Naive thymus-derived CD4-positive, alpha-beta T cell (primary cell): ENCODE measurements at regions of chr2 and their contacts with region 1.

Region 1: DNA sequence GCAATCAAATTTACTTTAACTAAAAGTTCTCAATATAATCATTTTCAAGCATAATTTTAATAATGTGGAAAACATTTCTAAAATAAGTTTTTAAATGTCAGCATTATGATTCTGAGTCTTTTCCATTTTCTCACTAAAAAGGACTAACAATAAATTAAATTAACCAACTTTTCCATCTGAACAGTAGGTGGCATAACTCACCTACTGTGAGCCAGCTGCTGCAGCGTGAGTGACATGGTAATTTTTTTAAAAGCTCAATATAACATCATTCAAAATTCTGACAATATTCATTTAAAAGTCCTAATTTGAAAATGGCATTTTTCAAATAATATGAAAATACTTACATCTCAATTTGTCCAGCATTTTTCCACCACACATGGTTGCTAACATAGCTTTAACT is 66.5 kb downstream of the DTNB start:
- DNase-seq: peak in 5 of 9 donors; percentile 20 to 47 (median 33)
- ATAC-seq: peak; percentile 57
- H3K4me3 ChIP-seq: no peak overlapping the region
- H3K4me3 Mint-ChIP-seq: no peak overlapping the region
- H3K27ac ChIP-seq: no peak overlapping the region
- H3K27ac Mint-ChIP-seq: no peak overlapping the region
- H3K4me1 ChIP-seq: no peaks in the 10 kb centered on the region
- H3K4me1 Mint-ChIP-seq: peaks cover 0 to 21% (median 4%) of the 10 kb centered on the region in 7 donors
- H3K27me3 ChIP-seq: no peaks in the 10 kb centered on the region
- H3K27me3 Mint-ChIP-seq: no peaks in the 10 kb centered on the region

Region 2: DNA sequence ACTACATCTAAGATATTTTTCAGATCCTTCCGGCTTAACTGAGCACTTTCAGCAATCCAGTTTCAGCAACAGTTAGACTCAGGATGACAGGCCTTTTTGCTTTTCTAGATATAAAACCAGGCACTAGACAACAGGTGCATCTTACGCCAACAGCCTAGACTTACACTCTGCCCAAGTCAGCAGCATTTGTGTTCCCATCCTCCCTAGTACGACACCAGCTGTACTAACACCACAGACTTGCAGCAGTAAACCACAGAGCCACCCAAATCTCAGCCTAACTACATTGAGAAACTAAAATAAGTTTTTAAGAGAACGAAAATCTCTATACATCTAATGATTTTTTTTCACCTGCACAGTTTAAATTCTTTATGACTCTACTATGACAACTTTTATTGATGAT is 175.3 kb before region 1 on chr2:
- CTCF ChIA-PET with region 1: no interaction called
- POLR2A ChIA-PET with region 1: no interaction called
- intact Hi-C with region 1: no loop called
- DNase-seq: no peak
- ATAC-seq: no peak
- H3K4me3 ChIP-seq: no peak overlapping the region
- H3K4me3 Mint-ChIP-seq: no peak overlapping the region
- H3K27ac ChIP-seq: no peak overlapping the region
- H3K27ac Mint-ChIP-seq: no peak overlapping the region
- H3K4me1 ChIP-seq: no peaks in the 10 kb centered on the region
- H3K4me1 Mint-ChIP-seq: peaks cover 0 to 13% (median 0%) of the 10 kb centered on the region in 7 donors
- H3K27me3 ChIP-seq: no peaks in the 10 kb centered on the region
- H3K27me3 Mint-ChIP-seq: no peaks in the 10 kb centered on the region

Region 3: GRCh38 chr2:25664183-25664964 is 57.5 kb after region 1 on chr2:
- CTCF ChIA-PET with region 1: interaction called, 10 read pairs
- POLR2A ChIA-PET with region 1: no interaction called
- intact Hi-C with region 1: loop called (anchors 1 to 5 kb)
- DNase-seq: peak in 1 of 9 donors; percentile 7
- ATAC-seq: peak; percentile 67
- H3K4me3 ChIP-seq: no peak overlapping the region
- H3K4me3 Mint-ChIP-seq: peak overlapping the region in 8 of 10 donors; percentile 6 to 68 (median 47)
- H3K27ac ChIP-seq: no peak overlapping the region
- H3K27ac Mint-ChIP-seq: peak overlapping the region in 1 of 9 donors; percentile 49
- H3K4me1 ChIP-seq: no peaks in the 10 kb centered on the region
- H3K4me1 Mint-ChIP-seq: peaks cover 19 to 41% (median 26%) of the 10 kb centered on the region in 7 donors
- H3K27me3 ChIP-seq: no peaks in the 10 kb centered on the region
- H3K27me3 Mint-ChIP-seq: peaks cover 0 to 3% (median 0%) of the 10 kb centered on the region in 5 donors

Region 4: DNA sequence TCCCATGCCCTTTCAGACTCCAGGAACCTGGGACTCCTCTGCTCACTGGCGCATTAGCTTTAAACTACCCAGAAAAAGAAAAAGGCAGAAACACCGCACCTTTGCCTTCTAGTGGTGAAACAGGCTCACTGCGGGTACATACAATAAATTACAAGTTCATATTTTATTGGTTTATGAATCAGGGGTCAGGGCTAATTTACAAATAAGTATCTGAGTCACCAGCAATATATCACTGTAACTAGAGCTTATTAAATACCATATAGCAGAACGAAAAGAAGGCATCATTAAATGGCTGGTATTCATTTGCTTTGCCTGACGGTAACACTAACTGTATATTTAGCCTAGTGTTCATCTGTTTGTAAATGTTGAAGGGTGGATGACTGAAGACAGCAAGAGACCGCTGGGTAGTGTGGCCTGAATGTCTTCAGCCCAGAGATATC is 93.3 kb after region 1 on chr2:
- CTCF ChIA-PET with region 1: interaction called, 80 read pairs
- POLR2A ChIA-PET with region 1: no interaction called
- intact Hi-C with region 1: loop called (anchors 1 kb)
- DNase-seq: peak in 7 of 9 donors; percentile 12 to 41 (median 34)
- ATAC-seq: peak; percentile 53
- H3K4me3 ChIP-seq: no peak overlapping the region
- H3K4me3 Mint-ChIP-seq: no peak overlapping the region
- H3K27ac ChIP-seq: no peak overlapping the region
- H3K27ac Mint-ChIP-seq: peak overlapping the region in 2 of 9 donors; percentile 6 to 81
- H3K4me1 ChIP-seq: no peaks in the 10 kb centered on the region
- H3K4me1 Mint-ChIP-seq: peaks cover 0 to 4% (median 4%) of the 10 kb centered on the region in 7 donors
- H3K27me3 ChIP-seq: no peaks in the 10 kb centered on the region
- H3K27me3 Mint-ChIP-seq: peaks cover 0 to 2% (median 0%) of the 10 kb centered on the region in 5 donors

Region 5: GRCh38 chr2:26144953-26145680 is 538.2 kb after region 1 on chr2:
- CTCF ChIA-PET with region 1: interaction called, 3 read pairs
- POLR2A ChIA-PET with region 1: no interaction called
- intact Hi-C with region 1: loop called (anchors 1 to 5 kb)
- DNase-seq: peak; percentile 22 to 59 (median 47)
- ATAC-seq: peak; percentile 73
- H3K4me3 ChIP-seq: no peak overlapping the region
- H3K4me3 Mint-ChIP-seq: no peak overlapping the region
- H3K27ac ChIP-seq: no peak overlapping the region
- H3K27ac Mint-ChIP-seq: peak overlapping the region in 3 of 9 donors; percentile 4 to 21 (median 7)
- H3K4me1 ChIP-seq: no peaks in the 10 kb centered on the region
- H3K4me1 Mint-ChIP-seq: peaks cover 0 to 5% (median 0%) of the 10 kb centered on the region in 7 donors
- H3K27me3 ChIP-seq: no peaks in the 10 kb centered on the region
- H3K27me3 Mint-ChIP-seq: peaks cover 6 to 10% (median 8%) of the 10 kb centered on the region in 5 donors